Dendritic cell treated with granulocyte-macrophage colony-stimulating factor and Interleukin-4, amounts not matched to agents 40 ng/mL and 50 ng/mL, for 4 days (primary cell): ENCODE measurements at regions of chr7 and their contacts with region 1.

Region 1: GRCh38 chr7:17680943-17681351 is 259.3 kb downstream of the SNX13 start:
- H3K4me3 Mint-ChIP-seq: no peak overlapping the region
- H3K27ac Mint-ChIP-seq: peak overlapping the region; percentile 82
- H3K4me1 Mint-ChIP-seq: peaks cover 26% of the 10 kb centered on the region
- H3K27me3 Mint-ChIP-seq: no peaks in the 10 kb centered on the region

Region 2: GRCh38 chr7:17991866-17992648 is 311.1 kb after region 1 on chr7:
- intact Hi-C with region 1: loop called (anchors 5 kb)
- H3K4me3 Mint-ChIP-seq: no peak overlapping the region
- H3K27ac Mint-ChIP-seq: no peak overlapping the region
- H3K4me1 Mint-ChIP-seq: peaks cover 11% of the 10 kb centered on the region
- H3K27me3 Mint-ChIP-seq: no peaks in the 10 kb centered on the region

Region 3: GRCh38 chr7:18212758-18213157 is 531.8 kb after region 1 on chr7:
- intact Hi-C with region 1: loop called (anchors 10 kb)
- H3K4me3 Mint-ChIP-seq: no peak overlapping the region
- H3K27ac Mint-ChIP-seq: no peak overlapping the region
- H3K4me1 Mint-ChIP-seq: peaks cover 24% of the 10 kb centered on the region
- H3K27me3 Mint-ChIP-seq: no peaks in the 10 kb centered on the region